Activated B cell treated with CpG ODN at 0.5 μM for 24 hours (primary cell): ENCODE measurements at regions of chr18 and their contacts with region 1.

Region 1: GRCh38 chr18:22813648-22814328 is 119.3 kb upstream of the RBBP8 start:
- DNase-seq: no peak
- ATAC-seq: peak; percentile 56
- H3K4me3 Mint-ChIP-seq: no peak overlapping the region
- H3K27ac Mint-ChIP-seq: no peak overlapping the region
- H3K4me1 Mint-ChIP-seq: no peaks in the 10 kb centered on the region
- H3K27me3 Mint-ChIP-seq: peaks cover 8% of the 10 kb centered on the region
- CTCF ChIP-seq: no peak

Region 2: DNA sequence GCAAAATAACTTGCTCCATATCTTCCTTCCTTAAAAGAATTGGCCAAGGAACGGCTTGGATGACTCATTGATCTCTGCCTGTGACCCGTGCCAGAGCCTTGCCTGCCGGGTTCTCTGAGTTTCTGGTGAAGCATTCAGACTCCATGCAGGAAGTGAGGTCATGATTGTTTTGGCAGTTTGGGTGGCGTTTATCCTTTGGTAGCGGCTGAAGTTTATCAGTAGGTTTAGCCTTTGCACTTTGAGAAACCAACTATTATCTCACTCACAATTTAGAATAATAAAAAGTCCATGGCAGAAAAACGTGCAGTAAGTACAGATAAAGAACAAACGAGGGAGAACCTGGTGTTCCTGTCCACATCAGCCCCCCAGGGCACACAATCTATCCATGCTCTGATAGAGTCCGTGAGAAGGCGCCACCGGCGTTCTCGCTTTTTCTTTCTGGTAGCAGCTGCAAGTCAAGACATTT is 381.1 kb before region 1 on chr18:
- CTCF ChIA-PET with region 1: no interaction called
- POLR2A ChIA-PET with region 1: no interaction called
- intact Hi-C with region 1: no loop called
- DNase-seq: no peak
- ATAC-seq: no peak
- H3K4me3 Mint-ChIP-seq: no peak overlapping the region
- H3K27ac Mint-ChIP-seq: no peak overlapping the region
- H3K4me1 Mint-ChIP-seq: no peaks in the 10 kb centered on the region
- H3K27me3 Mint-ChIP-seq: no peaks in the 10 kb centered on the region
- CTCF ChIP-seq: no peak

Region 3: GRCh38 chr18:22883179-22883578 is 69.4 kb after region 1 on chr18:
- CTCF ChIA-PET with region 1: no interaction called
- POLR2A ChIA-PET with region 1: no interaction called
- intact Hi-C with region 1: no loop called
- DNase-seq: no peak
- ATAC-seq: no peak
- H3K4me3 Mint-ChIP-seq: no peak overlapping the region
- H3K27ac Mint-ChIP-seq: no peak overlapping the region
- H3K4me1 Mint-ChIP-seq: no peaks in the 10 kb centered on the region
- H3K27me3 Mint-ChIP-seq: no peaks in the 10 kb centered on the region
- CTCF ChIP-seq: no peak

Region 4: GRCh38 chr18:22983175-22983574 is 169.4 kb after region 1 on chr18:
- CTCF ChIA-PET with region 1: interaction called, 16 read pairs
- POLR2A ChIA-PET with region 1: no interaction called
- intact Hi-C with region 1: loop called (anchors 1 kb)
- DNase-seq: no peak
- ATAC-seq: no peak
- H3K4me3 Mint-ChIP-seq: no peak overlapping the region
- H3K27ac Mint-ChIP-seq: no peak overlapping the region
- H3K4me1 Mint-ChIP-seq: peaks cover 34% of the 10 kb centered on the region
- H3K27me3 Mint-ChIP-seq: no peaks in the 10 kb centered on the region
- CTCF ChIP-seq: no peak

Region 5: DNA sequence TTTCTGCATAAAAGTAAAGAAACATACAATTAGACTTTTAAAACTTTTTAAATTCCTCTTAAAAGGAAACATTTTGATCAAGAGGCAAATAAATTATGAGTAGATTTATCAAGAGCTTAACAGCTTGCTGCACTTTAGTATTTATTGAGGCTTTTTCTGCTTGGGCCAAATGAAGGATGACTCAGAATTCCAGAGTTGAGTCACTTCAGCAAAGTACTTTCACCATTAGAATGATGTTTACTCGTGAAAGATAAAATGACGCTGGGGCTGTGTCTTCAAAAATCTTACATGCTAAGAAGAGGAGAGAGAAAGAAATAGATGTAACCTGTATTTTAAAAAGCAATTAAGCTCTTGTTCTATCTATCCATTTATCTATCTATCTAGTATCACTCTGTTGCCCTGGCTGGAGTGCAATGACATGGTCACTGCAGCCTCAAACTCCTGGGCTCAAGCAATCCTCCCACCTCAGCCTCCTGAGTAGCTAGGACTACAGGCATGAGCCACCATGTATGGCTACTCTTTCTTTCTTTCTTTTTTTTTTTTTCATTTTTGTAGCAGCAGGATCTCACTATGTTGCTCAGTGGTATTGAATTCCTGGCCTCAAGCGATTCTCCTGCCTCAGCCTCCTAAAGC is 564.0 kb after region 1 on chr18:
- CTCF ChIA-PET with region 1: no interaction called
- POLR2A ChIA-PET with region 1: no interaction called
- intact Hi-C with region 1: loop called (anchors 2 kb)
- DNase-seq: no peak
- ATAC-seq: peak; percentile 50
- H3K4me3 Mint-ChIP-seq: no peak overlapping the region
- H3K27ac Mint-ChIP-seq: no peak overlapping the region
- H3K4me1 Mint-ChIP-seq: peaks cover 8% of the 10 kb centered on the region
- H3K27me3 Mint-ChIP-seq: no peaks in the 10 kb centered on the region
- CTCF ChIP-seq: no peak

Region 6: GRCh38 chr18:23406271-23406787 is 592.5 kb after region 1 on chr18:
- CTCF ChIA-PET with region 1: interaction called, 10 read pairs
- POLR2A ChIA-PET with region 1: no interaction called
- intact Hi-C with region 1: loop called (anchors 1 kb)
- DNase-seq: no peak
- ATAC-seq: no peak
- H3K4me3 Mint-ChIP-seq: no peak overlapping the region
- H3K27ac Mint-ChIP-seq: no peak overlapping the region
- H3K4me1 Mint-ChIP-seq: no peaks in the 10 kb centered on the region
- H3K27me3 Mint-ChIP-seq: no peaks in the 10 kb centered on the region
- CTCF ChIP-seq: no peak

Region 7: DNA sequence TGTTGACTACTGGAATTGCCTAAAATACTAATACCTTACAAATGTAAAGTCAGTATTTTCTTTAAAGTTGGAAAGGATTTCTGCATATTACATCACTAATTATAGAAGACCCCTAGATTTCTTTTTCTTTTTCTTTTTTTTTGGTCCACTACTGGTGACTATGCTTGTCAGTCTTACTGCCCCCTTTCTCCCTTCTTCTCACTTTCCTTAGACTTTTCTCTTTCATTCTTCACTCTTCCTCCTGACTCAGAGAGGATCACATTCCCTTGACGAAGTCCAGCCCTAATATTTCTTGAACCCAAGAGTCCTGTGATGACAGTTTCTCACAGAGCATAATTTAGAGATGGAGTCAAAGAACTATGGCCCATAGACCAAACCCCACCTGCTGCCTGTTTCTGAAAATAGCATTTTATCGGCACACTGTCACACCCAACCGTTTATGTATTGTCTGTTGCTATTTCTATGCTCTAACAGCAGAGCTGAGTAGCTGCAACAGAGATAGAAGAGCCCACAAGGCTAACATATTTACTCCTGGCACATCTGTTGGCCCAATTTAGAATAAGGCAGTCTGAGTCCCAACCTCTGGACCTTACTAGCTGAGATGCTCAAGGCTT is 598.7 kb after region 1 on chr18:
- CTCF ChIA-PET with region 1: interaction called, 10 read pairs
- POLR2A ChIA-PET with region 1: no interaction called
- intact Hi-C with region 1: loop called (anchors 1 kb)
- DNase-seq: no peak
- ATAC-seq: no peak
- H3K4me3 Mint-ChIP-seq: no peak overlapping the region
- H3K27ac Mint-ChIP-seq: no peak overlapping the region
- H3K4me1 Mint-ChIP-seq: peaks cover 7% of the 10 kb centered on the region
- H3K27me3 Mint-ChIP-seq: no peaks in the 10 kb centered on the region
- CTCF ChIP-seq: no peak

Region 8: DNA sequence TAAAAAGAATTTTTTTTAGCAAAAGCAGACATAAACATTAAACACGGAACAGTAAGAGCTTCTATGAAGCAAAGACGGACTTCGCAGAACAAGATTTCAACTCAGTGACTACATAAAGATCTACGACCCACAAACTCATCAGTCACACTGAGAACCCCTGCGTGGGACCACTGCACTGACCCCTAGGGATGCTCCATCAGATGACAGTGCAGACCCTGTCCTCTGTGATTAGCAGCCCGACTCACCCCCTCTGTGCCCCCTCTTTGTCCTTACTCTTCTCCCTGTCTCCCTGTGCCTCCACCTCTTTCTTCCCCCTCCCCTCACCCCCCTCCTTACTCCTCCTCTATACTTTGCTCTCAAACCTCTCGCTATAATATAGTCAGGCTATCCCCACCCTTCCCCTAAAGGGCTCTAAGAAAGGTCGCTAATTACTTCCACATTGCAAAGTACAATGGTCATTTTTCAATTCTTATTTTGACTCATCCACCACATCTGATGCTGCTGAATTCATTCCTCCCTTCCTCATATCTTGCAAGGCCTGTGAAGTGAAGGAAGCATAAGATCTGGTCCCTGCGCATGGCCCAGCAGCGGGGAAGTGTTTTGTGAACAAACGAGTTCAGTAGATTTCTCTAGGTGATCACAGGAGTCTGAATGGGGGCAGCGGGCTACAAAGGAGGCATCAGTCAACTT is 1414.3 kb after region 1 on chr18:
- CTCF ChIA-PET with region 1: no interaction called
- POLR2A ChIA-PET with region 1: no interaction called
- intact Hi-C with region 1: no loop called
- DNase-seq: no peak
- ATAC-seq: no peak
- H3K4me3 Mint-ChIP-seq: no peak overlapping the region
- H3K27ac Mint-ChIP-seq: no peak overlapping the region
- H3K4me1 Mint-ChIP-seq: no peaks in the 10 kb centered on the region
- H3K27me3 Mint-ChIP-seq: peaks cover 9% of the 10 kb centered on the region
- CTCF ChIP-seq: no peak